ENCODE measurements at regions of chr1 and their contacts with region 1.

Region 1: DNA sequence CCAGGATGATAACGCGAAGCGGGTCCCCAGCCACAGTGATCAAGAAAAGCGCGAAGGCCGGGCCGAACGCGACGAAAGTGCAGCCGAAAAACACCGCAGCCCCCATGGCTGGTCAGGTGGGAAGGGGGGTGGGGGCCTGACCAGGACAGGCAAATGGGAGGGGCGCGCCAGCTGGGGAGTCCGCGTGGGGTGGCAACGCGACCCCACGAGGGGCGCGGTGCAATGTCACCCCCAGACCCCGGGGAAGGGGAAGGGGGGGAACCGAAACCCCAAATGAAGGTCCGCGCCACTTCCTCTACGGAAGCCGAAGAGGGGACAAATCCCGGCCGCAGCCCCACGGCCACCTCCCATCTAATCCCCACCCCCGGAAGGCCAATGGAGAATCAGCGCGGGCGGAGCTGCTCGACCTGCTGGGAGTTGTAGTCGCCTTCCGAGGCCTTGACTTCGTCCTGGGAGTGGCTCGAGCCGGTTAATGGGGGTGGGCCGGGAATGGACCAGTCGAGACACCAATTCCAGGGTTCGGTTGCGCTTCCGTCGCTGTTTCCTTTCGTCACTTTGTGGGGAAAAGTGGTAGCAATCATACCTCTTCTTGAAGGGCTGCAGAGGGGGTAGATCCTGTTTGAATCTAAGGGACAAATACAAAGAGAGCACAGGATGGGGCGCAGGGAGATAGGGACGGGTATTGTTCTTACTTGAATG is at the start of gene APH1A:
- DNase-seq: peak; percentile 73 to 97 (median 89)
- ATAC-seq: peak; percentile 91 to 96
- H3K4me3 Mint-ChIP-seq: peak within 1 kb of the TSS; percentile 83 to 99 (median 98)
- H3K27ac Mint-ChIP-seq: peak within 1 kb of the TSS; percentile 91 to 99 (median 98)
- H3K4me1 Mint-ChIP-seq: peaks cover 22 to 40% (median 31%) of the 10 kb centered on the region in 4 donors
- H3K27me3 Mint-ChIP-seq: no peaks in the 10 kb centered on the region
- polyA plus RNA-seq, gene APH1A: 58.2 to 84.8 (median 67.1) TPM

Region 2: DNA sequence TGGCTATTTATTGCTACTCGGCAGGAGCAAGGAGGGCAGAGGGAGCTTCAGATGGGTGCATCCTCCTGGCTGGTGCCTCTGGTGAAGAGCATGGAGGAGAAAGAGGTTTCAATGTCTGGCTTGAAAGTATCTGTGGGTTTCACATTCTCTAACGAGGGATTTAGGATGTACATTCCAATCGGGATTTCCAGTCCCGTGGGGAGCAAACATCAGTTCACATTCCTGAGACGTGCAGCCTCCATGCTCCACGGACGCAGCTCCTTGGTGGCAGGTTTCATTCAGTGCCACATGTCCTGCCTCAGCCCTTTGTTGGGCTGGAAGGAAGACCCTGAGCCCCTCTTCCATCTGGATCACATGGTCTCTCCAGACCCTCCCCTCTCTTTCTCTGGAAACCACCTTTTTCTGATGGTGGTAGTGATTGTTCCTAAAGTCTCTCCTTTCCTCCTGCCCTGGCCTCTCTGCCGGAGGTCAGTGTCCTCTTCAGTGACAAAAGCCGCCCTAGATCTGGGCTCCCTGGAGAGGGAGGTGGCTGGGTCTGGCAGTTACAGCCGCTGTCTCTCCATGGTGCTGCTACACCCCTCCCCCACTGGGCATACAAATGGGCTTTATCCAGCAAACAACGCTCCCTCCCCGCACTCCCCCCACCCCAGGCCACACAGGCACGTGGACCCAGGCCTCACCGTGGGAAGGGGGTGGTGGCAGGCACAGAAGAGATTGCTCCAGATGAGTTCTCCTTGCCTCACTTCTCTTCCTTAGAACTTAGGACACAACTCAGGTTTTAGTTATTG is 12.1 kb before region 1 on chr1:
- POLR2A ChIA-PET with region 1: interaction called, 11 read pairs
- DNase-seq: no peak
- ATAC-seq: no peak
- H3K4me3 Mint-ChIP-seq: peak overlapping the region in 4 of 10 donors; percentile 12 to 65 (median 30)
- H3K27ac Mint-ChIP-seq: peak overlapping the region in 3 of 10 donors; percentile 44 to 68 (median 52)
- H3K4me1 Mint-ChIP-seq: peaks cover 10 to 24% (median 17%) of the 10 kb centered on the region in 4 donors
- H3K27me3 Mint-ChIP-seq: peaks cover 6 to 35% (median 33%) of the 10 kb centered on the region in 5 donors